ENCODE measurements at regions of chr16 and their contacts with region 1.

Region 1: DNA sequence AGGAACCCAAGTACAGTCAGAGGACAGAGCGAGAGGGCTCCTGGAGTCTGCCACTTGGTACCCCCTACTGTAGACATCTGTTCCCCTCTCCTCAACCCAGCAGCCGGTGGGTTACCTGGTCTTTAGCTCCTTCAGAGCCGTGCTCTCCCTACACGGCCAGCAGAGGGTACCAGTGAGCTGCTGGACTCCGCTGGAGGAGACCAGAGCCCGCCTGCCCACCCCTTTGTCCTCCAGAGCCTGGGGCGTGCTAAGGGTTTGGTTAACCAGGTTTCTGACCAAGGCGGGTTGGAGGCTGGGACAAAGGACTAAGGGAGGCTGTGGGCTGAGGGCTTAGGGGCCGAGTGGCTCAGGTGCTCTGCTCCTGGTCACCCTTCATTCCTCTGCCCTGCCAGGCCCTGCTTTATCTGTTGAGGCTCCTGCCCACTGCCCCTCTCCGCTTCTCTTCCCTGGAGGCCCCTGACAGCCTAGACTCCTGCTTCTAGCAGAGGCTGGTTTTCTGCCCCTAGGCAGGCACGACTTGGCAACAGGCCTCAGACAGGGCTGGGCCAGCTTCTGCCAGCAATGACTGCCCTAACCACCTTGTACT is 2.7 kb upstream of the HSD11B2 start:
- DNase-seq: peak; percentile 76
- H3K4me3 Mint-ChIP-seq: no peak overlapping the region
- H3K27ac Mint-ChIP-seq: no peak overlapping the region
- H3K4me1 Mint-ChIP-seq: peaks cover 10% of the 10 kb centered on the region
- H3K27me3 Mint-ChIP-seq: peaks cover 39% of the 10 kb centered on the region

Region 2: DNA sequence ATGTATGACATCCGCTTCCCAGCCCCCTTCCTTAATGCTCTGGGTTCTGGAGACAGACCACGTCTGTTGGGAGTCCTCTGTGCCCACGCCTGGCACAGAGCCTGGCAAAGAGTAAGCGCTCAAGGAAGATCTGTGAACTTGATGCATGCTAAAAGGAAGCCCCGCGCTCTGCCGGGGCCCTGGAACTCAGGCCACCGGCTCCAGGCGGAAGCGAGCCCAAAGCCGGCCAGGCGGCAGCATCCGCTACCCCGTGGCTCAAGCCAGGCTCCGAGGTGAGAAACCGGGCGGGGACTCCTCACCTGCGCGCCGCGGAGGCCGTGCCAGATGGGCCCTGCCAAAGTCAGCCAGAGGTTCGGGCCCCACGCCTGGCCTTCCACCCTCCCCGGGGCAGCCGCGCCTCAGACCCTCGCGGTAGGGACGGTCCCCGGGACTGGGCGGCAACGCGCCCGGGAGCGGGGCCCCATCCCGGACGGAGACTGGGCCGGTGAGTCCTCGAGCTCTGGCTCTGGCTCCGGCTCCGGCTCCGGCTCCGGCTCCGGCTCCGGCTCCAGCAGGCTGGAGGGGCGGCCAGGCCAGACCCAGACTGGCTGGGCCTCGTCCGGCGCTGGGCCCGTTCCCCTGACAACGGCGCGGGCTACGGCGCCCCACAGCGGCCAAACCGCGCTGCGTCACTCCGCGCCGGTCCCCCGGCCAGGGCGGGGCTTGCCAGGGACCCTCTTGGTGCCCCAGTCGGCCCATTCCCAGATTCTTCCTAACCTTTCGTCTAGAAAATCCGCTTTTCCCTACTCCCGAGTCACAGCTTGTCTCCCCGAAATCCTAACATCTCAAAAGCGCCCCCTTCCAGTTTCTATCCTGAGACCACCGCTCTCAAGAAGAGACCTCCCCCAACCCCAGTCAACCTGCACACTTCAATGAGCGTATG is 12.1 kb before region 1 on chr16 and contains the start of gene ZDHHC1:
- CTCF ChIA-PET with region 1: interaction called, 34 read pairs
- POLR2A ChIA-PET with region 1: interaction called, 3 read pairs
- intact Hi-C with region 1: no loop called
- DNase-seq: peak; percentile 66
- H3K4me3 Mint-ChIP-seq: peak within 1 kb of the TSS; percentile 53
- H3K27ac Mint-ChIP-seq: no peak within 1 kb of the TSS
- H3K4me1 Mint-ChIP-seq: peaks cover 3% of the 10 kb centered on the region
- H3K27me3 Mint-ChIP-seq: peaks cover 29% of the 10 kb centered on the region
- total RNA-seq, gene ZDHHC1: 0.57 to 0.68 TPM

Region 3: GRCh38 chr16:67441271-67441753 is 13.1 kb after region 1 on chr16:
- CTCF ChIA-PET with region 1: interaction called, 46 read pairs
- POLR2A ChIA-PET with region 1: no interaction called
- intact Hi-C with region 1: no loop called
- DNase-seq: no peak
- H3K4me3 Mint-ChIP-seq: no peak overlapping the region
- H3K27ac Mint-ChIP-seq: no peak overlapping the region
- H3K4me1 Mint-ChIP-seq: peaks cover 3% of the 10 kb centered on the region
- H3K27me3 Mint-ChIP-seq: no peaks in the 10 kb centered on the region

Region 4: DNA sequence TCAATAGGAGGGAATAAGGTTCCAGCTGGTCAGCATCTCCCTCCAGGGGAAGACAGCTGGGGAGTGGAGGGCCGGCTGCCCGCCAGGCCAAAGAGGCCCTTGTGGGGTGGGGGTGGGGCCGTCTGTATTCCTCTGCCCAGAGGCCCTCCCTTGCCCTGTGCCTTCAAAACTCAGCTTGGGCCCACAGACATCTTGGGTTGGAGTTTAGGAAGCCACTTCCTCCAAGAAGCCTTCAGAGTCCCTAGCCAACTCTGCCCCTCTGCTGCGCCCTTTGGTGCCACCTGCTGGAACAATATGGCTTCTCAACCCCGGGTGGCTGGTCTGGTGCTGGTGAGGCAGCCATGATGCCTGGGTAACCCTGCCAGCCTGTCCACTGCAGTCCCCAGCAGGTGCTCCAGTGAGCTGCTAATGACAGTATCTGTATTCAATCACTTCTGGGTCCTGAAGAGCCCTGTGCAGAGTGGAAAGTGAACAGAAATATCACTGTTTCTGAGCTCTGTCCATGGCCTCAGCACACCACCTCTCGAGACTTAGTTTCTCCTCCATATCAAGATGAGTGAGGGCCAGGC is 19.4 kb after region 1 on chr16:
- CTCF ChIA-PET with region 1: interaction called, 46 read pairs
- POLR2A ChIA-PET with region 1: interaction called, 4 read pairs
- intact Hi-C with region 1: no loop called
- DNase-seq: peak; percentile 87
- H3K4me3 Mint-ChIP-seq: no peak overlapping the region
- H3K27ac Mint-ChIP-seq: no peak overlapping the region
- H3K4me1 Mint-ChIP-seq: no peaks in the 10 kb centered on the region
- H3K27me3 Mint-ChIP-seq: no peaks in the 10 kb centered on the region

Region 5: DNA sequence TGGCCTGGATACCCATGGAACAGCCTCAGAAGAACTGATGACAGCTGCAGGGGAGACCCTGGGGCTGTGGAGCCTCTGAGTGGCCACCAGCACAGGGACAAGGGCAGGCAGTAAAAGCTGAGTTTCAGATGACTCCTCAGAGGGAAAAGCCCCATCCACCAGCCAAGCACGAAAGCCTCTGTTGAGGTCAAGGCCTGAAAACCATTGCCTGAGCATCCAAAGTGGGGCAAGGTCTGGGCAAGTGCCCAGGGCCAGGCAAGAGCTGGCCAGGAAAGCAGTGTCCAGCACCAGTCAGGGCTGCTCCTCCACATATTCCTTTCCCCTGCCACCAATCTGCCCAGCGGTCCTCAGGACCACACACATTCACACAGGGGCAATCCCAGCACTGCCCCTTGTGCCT is 36.3 kb after region 1 on chr16:
- CTCF ChIA-PET with region 1: interaction called, 71 read pairs
- POLR2A ChIA-PET with region 1: no interaction called
- intact Hi-C with region 1: loop called (anchors 1 kb)
- DNase-seq: no peak
- H3K4me3 Mint-ChIP-seq: no peak overlapping the region
- H3K27ac Mint-ChIP-seq: no peak overlapping the region
- H3K4me1 Mint-ChIP-seq: peaks cover 10% of the 10 kb centered on the region
- H3K27me3 Mint-ChIP-seq: no peaks in the 10 kb centered on the region

Region 6: GRCh38 chr16:67470359-67470758 is 42.1 kb after region 1 on chr16:
- CTCF ChIA-PET with region 1: interaction called, 71 read pairs
- POLR2A ChIA-PET with region 1: no interaction called
- intact Hi-C with region 1: loop called (anchors 1 kb)
- DNase-seq: no peak
- H3K4me3 Mint-ChIP-seq: no peak overlapping the region
- H3K27ac Mint-ChIP-seq: no peak overlapping the region
- H3K4me1 Mint-ChIP-seq: peaks cover 28% of the 10 kb centered on the region
- H3K27me3 Mint-ChIP-seq: no peaks in the 10 kb centered on the region